Caco-2 (cell line): ENCODE measurements at regions of chr11 and their contacts with region 1.

Region 1: DNA sequence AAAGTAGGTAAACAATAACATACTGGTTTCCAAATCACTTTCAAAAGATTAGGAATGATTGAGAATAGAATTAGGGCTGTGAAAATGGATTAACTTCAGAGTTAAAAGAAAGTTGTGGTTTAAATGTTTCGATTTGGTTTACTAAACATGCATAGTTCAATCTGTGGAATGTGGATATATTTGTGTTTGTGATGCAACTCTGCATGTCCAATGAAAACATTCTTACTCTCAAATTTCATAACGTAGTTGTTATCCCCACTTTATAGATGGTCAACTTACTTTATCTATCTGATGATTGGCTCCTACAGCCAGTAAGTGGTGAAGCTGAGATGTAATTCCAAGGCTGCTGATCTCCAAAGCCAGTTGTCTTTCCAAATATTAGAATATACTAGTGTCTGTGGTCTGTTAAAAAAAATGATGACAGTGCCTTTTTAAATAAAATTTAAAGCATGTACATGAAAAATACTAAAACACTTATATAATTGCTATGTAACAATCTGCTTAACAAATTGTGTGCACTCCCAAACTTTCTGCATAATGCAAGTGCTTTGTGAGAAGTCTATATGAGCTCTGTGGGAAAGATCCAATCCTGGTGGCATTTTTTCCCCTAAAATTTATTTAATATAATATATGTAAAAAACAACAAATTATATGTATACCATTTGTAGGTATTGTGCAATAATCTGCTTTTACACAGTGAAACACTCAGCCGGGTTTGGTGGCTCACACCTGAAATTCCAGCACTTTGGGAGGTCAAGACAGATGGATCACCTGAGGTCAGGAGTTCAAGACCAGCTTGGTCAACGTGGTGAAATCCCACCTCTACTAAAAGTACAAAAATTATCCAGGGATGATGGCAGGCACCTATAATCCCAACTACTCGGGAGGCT is 9.7 kb upstream of the SIK3 start:
- DNase-seq: no peak
- H3K4me3 ChIP-seq: no peak overlapping the region
- H3K4me3 Mint-ChIP-seq: no peak overlapping the region
- H3K27ac Mint-ChIP-seq: no peak overlapping the region
- H3K4me1 ChIP-seq: peaks cover 3% of the 10 kb centered on the region; the same call in 1 of the 2 replicates
- H3K4me1 Mint-ChIP-seq: no peaks in the 10 kb centered on the region
- H3K27me3 ChIP-seq: no peaks in the 10 kb centered on the region
- H3K27me3 Mint-ChIP-seq: no peaks in the 10 kb centered on the region
- CTCF ChIP-seq: no peak

Region 2: GRCh38 chr11:116732271-116733042 is 375.5 kb before region 1 on chr11:
- CTCF ChIA-PET with region 1: interaction called, 24 read pairs
- POLR2A ChIA-PET with region 1: no interaction called
- intact Hi-C with region 1: loop called (anchors 1 kb)
- DNase-seq: peak; percentile 80 to 84
- H3K4me3 ChIP-seq: no peak overlapping the region
- H3K4me3 Mint-ChIP-seq: no peak overlapping the region
- H3K27ac Mint-ChIP-seq: no peak overlapping the region
- H3K4me1 ChIP-seq: peaks cover 9% of the 10 kb centered on the region
- H3K4me1 Mint-ChIP-seq: peaks cover 15% of the 10 kb centered on the region
- H3K27me3 ChIP-seq: no peaks in the 10 kb centered on the region
- H3K27me3 Mint-ChIP-seq: peaks cover 9% of the 10 kb centered on the region
- CTCF ChIP-seq: peak; percentile 97 to 98

Region 3: GRCh38 chr11:116787786-116788486 is 320.0 kb before region 1 on chr11 and contains the start of gene ZPR1:
- CTCF ChIA-PET with region 1: interaction called, 13 read pairs
- POLR2A ChIA-PET with region 1: no interaction called
- intact Hi-C with region 1: loop called (anchors 1 kb)
- DNase-seq: peak; percentile 84 to 90
- H3K4me3 ChIP-seq: peak within 1 kb of the TSS; percentile 80
- H3K4me3 Mint-ChIP-seq: peak within 1 kb of the TSS; percentile 80
- H3K27ac Mint-ChIP-seq: peak within 1 kb of the TSS; percentile 94
- H3K4me1 ChIP-seq: peaks cover 46% of the 10 kb centered on the region
- H3K4me1 Mint-ChIP-seq: peaks cover 42% of the 10 kb centered on the region
- H3K27me3 ChIP-seq: no peaks in the 10 kb centered on the region
- H3K27me3 Mint-ChIP-seq: no peaks in the 10 kb centered on the region
- CTCF ChIP-seq: no peak
- total RNA-seq, gene ZPR1: 168 and 194 TPM in 2 replicates

Region 4: GRCh38 chr11:116835791-116836631 is 271.9 kb before region 1 on chr11:
- CTCF ChIA-PET with region 1: interaction called, 8 read pairs
- POLR2A ChIA-PET with region 1: interaction called, 14 read pairs
- intact Hi-C with region 1: no loop called
- DNase-seq: peak; percentile 69 to 77
- H3K4me3 ChIP-seq: peak overlapping the region; percentile 40
- H3K4me3 Mint-ChIP-seq: peak overlapping the region; percentile 68
- H3K27ac Mint-ChIP-seq: peak overlapping the region; percentile 92
- H3K4me1 ChIP-seq: peaks cover 86% of the 10 kb centered on the region
- H3K4me1 Mint-ChIP-seq: peaks cover 65% of the 10 kb centered on the region
- H3K27me3 ChIP-seq: no peaks in the 10 kb centered on the region
- H3K27me3 Mint-ChIP-seq: no peaks in the 10 kb centered on the region
- CTCF ChIP-seq: peak; percentile 51

Region 5: DNA sequence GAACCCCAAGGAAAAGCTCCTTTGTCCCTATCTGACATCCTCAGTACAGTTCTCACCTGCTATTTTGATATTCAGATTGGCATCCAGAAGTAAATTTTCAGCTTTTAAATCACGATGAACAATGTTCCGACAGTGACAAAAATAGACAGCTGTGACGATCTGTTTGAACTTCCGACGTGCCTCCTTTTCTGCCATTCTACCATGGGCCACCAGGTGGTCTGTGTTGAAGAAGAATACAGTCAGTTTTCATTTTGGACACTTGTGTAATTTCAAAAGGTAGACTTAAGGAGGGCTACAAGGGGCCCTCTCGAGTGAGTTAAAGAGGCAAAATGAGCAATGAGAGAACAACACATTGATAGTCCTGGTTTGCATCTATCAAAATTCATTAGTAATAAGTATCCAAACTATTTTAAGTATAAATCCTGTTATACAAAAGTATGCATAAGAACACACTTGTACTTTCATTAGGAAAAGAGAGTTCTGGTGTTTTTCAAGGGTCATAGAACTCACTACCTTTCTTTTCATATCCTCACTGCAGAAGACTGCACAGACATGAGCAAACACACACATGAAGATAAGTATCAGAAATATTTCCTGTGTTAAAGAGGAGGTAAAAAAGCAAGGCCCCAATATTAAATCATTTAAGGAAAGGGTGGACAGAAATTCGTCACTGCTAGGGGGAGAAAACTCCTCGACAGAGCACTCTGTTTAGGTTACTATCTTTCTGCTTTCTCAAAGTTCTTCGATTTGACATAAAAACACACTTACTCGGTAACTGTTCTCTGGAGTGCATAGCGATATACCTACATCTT is 180.6 kb before region 1 on chr11:
- CTCF ChIA-PET with region 1: interaction called, 3 read pairs
- POLR2A ChIA-PET with region 1: interaction called, 18 read pairs
- intact Hi-C with region 1: loop called (anchors 1 kb)
- DNase-seq: peak in 1 of 2 experiments; percentile 69
- H3K4me3 ChIP-seq: no peak overlapping the region
- H3K4me3 Mint-ChIP-seq: no peak overlapping the region
- H3K27ac Mint-ChIP-seq: no peak overlapping the region
- H3K4me1 ChIP-seq: peaks cover 17% of the 10 kb centered on the region; the same call in 1 of the 2 replicates
- H3K4me1 Mint-ChIP-seq: peaks cover 22% of the 10 kb centered on the region
- H3K27me3 ChIP-seq: no peaks in the 10 kb centered on the region
- H3K27me3 Mint-ChIP-seq: no peaks in the 10 kb centered on the region
- CTCF ChIP-seq: peak; percentile 82 to 85

Region 6: GRCh38 chr11:116986521-116987105 is 121.3 kb before region 1 on chr11:
- CTCF ChIA-PET with region 1: no interaction called
- POLR2A ChIA-PET with region 1: no interaction called
- intact Hi-C with region 1: no loop called
- DNase-seq: no peak
- H3K4me3 ChIP-seq: no peak overlapping the region
- H3K4me3 Mint-ChIP-seq: no peak overlapping the region
- H3K27ac Mint-ChIP-seq: no peak overlapping the region
- H3K4me1 ChIP-seq: peaks cover 49% of the 10 kb centered on the region
- H3K4me1 Mint-ChIP-seq: peaks cover 47% of the 10 kb centered on the region
- H3K27me3 ChIP-seq: no peaks in the 10 kb centered on the region
- H3K27me3 Mint-ChIP-seq: no peaks in the 10 kb centered on the region
- CTCF ChIP-seq: no peak

Region 7: DNA sequence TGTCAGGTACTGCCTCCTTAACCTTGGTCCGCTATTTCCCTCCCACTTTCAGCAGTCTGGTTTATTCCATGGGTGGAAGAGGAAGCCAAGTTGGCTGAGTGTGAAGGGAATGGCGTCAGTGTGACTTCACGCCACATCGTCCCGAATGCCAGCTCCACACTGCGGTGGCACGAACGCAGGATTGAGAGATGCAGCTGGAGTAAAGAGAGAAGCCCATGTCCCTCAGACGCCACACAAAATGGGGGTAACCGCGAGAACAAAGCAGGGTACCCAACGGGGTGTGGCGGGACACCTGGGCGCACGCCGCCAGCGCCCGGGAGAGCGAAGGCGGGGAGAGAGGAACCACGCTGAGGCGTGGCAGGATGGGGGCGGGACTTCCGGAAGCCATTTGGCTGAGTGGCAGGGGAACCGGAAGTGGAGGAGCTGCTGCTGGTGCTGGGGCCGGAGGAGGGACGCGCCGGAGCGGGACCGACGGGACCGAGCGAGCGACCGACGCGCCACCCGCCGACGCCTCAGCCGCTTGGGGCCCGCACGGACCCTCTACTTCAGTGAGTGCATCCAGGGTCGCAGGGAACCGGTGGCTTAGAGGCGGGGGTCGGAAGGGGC is 36.0 kb after region 1 on chr11 and contains the start of gene PAFAH1B2:
- CTCF ChIA-PET with region 1: no interaction called
- POLR2A ChIA-PET with region 1: no interaction called
- intact Hi-C with region 1: loop called (anchors 2 kb)
- DNase-seq: peak; percentile 98 to 99
- H3K4me3 ChIP-seq: peak within 1 kb of the TSS; percentile 89
- H3K4me3 Mint-ChIP-seq: peak within 1 kb of the TSS; percentile 98
- H3K27ac Mint-ChIP-seq: peak within 1 kb of the TSS; percentile 95
- H3K4me1 ChIP-seq: peaks cover 6% of the 10 kb centered on the region; the same call in 1 of the 2 replicates
- H3K4me1 Mint-ChIP-seq: peaks cover 6% of the 10 kb centered on the region
- H3K27me3 ChIP-seq: no peaks in the 10 kb centered on the region
- H3K27me3 Mint-ChIP-seq: no peaks in the 10 kb centered on the region
- CTCF ChIP-seq: no peak
- total RNA-seq, gene PAFAH1B2: 167 and 168 TPM in 2 replicates